AG04450 (cell line): ENCODE measurements at regions of chr16 and their contacts with region 1.

Region 1: GRCh38 chr16:22098405-22099255 is 6.3 kb downstream of the VWA3A start:
- DNase-seq: no peak
- H3K4me3 ChIP-seq: peak overlapping the region; percentile 8; the same call in 1 of the 2 replicates
- H3K27ac ChIP-seq: no peak overlapping the region
- H3K27me3 ChIP-seq: peaks cover 5% of the 10 kb centered on the region
- CTCF ChIP-seq: peak; percentile 66

Region 2: GRCh38 chr16:21940570-21940969 is 158.1 kb before region 1 on chr16:
- CTCF ChIA-PET with region 1: no interaction called
- POLR2A ChIA-PET with region 1: no interaction called
- DNase-seq: no peak
- H3K4me3 ChIP-seq: no peak overlapping the region
- H3K27ac ChIP-seq: no peak overlapping the region
- H3K27me3 ChIP-seq: peaks cover 5% of the 10 kb centered on the region
- CTCF ChIP-seq: no peak

Region 3: DNA sequence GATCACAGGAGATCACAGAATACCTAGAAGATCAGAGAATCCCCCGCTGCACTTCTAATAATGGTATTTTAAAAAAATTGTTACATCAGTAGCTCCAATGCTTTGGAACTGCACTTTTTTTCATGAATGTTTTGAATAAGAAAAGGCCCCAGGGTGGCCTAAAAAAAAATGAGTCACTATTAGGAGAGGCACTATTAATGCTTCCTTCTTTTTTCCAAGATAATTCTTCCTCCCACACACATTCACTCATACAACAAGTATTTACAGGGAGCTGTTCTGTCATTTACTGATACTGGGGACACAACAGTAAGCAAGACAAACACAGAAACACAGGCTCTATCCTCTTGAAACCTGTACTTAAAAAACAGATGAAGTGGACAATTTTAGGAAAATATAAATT is 97.0 kb before region 1 on chr16:
- CTCF ChIA-PET with region 1: interaction called, 39 read pairs
- POLR2A ChIA-PET with region 1: no interaction called
- DNase-seq: peak; percentile 13
- H3K4me3 ChIP-seq: no peak overlapping the region
- H3K27ac ChIP-seq: no peak overlapping the region
- H3K27me3 ChIP-seq: no peaks in the 10 kb centered on the region
- CTCF ChIP-seq: no peak

Region 4: DNA sequence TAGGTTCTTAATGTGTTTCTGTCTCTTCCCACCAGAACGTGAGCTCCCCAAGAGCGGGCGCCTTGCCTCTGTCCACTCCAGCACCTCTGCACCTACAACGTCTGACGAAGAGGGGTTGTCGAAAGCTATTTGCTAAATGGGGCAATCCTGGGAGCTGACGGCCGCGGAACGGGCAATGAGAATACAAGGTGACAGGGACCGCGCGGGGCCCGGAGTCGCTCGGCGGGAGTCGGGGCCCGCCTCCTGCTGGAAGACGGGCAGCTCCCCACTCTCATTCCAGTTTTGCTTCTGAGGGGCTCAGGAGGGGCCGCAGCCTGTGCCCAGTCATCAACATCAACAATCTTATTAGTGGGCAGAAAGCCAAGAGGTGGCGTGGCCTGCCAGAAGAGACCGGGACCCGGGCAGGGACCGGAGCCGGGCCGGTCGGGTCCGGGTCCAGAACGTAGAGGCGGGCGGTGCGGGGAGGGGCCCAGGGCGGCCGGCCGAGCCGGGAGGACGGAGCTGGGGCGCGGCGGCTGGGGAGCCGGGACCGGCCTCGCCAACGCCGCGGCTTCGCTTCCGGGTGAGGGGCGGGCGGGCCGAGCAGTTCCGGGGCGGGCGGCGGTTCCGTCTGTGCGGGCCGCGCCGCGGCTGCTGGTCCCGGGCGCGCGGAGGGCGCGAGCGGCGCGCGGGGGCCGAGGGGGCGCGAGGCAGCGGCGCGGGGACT is 91.0 kb before region 1 on chr16 and contains the start of gene MOSMO:
- CTCF ChIA-PET with region 1: interaction called, 39 read pairs
- POLR2A ChIA-PET with region 1: no interaction called
- DNase-seq: no peak
- H3K4me3 ChIP-seq: peak within 1 kb of the TSS; percentile 77
- H3K27ac ChIP-seq: peak within 1 kb of the TSS; percentile 25
- H3K27me3 ChIP-seq: no peaks in the 10 kb centered on the region
- CTCF ChIP-seq: no peak
- polyA plus RNA-seq, gene MOSMO: 15.6 and 15.8 TPM in 2 replicates

Region 5: DNA sequence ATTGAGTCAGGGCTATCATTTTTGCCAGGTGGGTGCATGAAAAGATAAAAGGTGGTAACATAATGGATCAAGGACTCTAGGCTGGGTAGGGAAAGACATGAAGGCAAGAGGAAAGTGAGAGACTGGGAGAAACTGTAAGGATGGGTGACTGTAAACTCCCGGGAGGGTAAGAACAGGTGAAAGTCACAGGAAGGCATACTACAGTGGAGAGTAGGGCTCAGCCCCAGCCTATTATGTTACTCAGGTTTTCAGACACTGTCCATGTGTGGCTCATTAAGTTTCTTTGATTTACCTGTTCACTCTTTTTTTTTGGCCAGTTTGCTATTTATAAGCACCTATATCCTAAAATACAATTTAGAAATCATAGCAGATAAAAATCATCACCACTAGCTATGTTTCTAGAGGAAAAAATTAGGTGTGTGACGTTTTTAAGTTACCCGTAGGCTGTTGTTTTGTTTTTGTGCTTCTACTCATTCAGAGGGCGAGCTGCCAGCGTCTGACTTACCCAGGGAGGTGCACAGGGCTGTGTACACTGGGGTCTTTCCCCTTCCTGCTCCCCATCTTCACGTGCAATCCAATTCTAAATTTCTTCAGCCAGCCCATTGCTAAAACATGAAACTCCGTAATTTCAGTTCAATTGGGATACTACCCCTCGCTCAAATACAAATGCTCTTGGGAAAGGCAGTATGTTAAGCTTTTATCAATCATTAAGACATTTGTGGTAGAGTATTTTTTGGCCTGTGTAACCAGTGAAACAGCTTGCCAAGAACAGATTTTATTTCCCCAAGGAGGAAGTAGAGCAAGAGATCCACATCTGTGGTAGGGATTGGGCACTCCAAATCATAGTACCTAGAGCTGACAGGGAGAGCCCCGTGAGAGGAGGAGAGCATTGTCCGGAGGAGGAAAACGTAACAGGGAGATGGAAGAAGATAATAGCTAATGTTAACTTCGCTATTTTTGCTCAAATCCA is 28.0 kb before region 1 on chr16:
- CTCF ChIA-PET with region 1: interaction called, 12 read pairs
- POLR2A ChIA-PET with region 1: no interaction called
- DNase-seq: no peak
- H3K4me3 ChIP-seq: peak overlapping the region; percentile 23; the same call in 1 of the 2 replicates
- H3K27ac ChIP-seq: peak overlapping the region; percentile 25
- H3K27me3 ChIP-seq: no peaks in the 10 kb centered on the region
- CTCF ChIP-seq: no peak

Region 6: DNA sequence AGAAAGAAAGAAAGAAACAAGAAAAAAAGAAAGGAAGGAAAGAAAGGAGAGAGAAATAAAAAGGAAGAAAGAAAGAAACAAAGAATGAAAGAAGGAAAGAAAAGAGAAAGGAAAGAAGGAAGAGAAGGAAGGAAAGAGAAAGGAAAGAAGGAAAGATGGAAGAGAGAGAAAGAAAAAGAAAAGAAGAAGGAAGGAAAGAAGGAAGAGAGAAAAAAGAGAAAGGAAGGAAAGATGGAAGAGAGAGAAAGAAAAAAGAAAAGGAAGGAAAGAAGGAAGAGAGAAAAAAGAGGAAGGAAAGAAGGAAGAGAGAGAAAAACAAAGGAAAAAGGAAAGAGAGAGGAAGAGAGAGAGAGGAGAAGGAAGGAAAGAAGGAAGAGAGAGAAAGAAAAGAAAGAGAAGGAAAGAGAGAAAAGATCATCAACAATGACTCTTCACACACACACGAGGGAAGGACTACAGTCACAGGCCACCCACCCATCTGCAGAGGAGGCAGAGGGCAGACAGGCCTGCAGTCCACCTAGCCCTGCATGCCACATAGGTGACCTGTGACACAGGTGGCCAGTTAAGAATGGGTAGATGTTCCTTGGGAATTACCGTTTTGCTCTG is 17.6 kb after region 1 on chr16:
- CTCF ChIA-PET with region 1: interaction called, 14 read pairs
- POLR2A ChIA-PET with region 1: no interaction called
- DNase-seq: no peak
- H3K4me3 ChIP-seq: no peak overlapping the region
- H3K27ac ChIP-seq: no peak overlapping the region
- H3K27me3 ChIP-seq: peaks cover 6% of the 10 kb centered on the region
- CTCF ChIP-seq: no peak